ENCODE measurements at regions of chr17 and their contacts with region 1.

Region 1: DNA sequence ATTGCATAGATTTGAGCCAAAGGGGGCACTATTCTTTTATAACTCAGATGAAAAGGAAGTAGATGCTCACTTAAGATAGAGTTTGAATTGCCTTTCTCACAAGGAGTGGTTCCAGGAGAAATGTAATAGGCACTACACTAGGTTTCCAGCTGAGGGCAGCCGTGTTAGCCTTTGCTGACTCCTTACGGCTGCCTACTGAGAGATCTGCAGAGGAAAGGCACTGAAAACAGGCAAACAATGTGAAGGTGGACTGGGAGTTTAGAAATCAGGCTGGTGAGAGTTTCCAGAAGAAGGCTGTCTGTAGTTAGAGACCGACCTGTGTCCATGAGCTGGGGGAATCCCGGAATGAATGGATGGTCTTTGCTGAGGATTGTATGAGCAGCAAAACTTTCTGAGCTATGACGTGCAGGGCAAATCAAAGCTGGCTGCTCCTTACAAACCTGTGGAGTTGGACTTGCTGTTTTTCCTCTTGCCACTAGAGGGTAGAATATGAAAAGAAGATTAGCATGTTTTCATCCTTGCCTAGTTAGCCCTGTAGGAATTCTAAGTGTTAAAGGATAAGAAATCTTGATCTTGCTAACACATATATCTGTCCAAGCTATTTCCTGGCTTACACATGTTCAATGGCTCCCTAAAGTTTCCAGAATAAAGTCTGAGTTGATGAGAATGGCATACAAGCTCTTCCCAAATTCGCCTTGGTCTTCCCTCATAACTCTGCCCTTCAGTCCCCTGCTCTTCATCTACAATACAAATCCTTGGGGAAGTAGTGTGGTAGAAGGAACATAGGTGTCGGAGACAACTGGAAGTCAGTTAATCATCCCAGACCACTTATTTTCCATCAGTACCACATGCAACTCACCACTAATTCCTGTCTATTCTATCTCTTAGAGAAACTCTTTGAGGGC is 20.1 kb upstream of the TAOK1 start:
- DNase-seq: peak; percentile 53

Region 2: GRCh38 chr17:29195465-29196081 is 174.5 kb before region 1 on chr17:
- CTCF ChIA-PET with region 1: no interaction called
- POLR2A ChIA-PET with region 1: no interaction called
- DNase-seq: no peak

Region 3: GRCh38 chr17:29283271-29283895 is 86.7 kb before region 1 on chr17:
- CTCF ChIA-PET with region 1: no interaction called
- POLR2A ChIA-PET with region 1: no interaction called
- DNase-seq: no peak

Region 4: GRCh38 chr17:29384900-29385299 is 14.8 kb after region 1 on chr17:
- CTCF ChIA-PET with region 1: interaction called, 12 read pairs
- POLR2A ChIA-PET with region 1: interaction called, 8 read pairs
- DNase-seq: no peak

Region 5: DNA sequence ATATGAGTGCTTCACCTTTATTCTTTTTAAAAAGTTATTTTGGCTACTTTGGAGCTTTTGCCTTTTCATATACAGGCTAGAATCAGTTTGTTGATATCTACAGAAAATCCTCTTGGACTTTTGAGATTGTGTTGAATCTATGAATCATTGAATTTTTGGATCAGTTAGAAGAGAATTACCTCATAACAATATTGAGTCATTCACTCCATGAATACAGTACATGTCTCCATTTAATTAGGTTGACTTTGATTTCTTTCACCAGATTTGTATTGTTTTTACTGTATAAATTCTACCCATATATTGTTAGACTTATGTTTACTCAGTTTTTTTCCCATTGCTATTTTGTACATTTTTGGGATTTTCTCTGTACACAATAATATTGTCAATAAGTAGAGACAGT is 74.5 kb after region 1 on chr17:
- CTCF ChIA-PET with region 1: no interaction called
- POLR2A ChIA-PET with region 1: no interaction called
- DNase-seq: no peak

Region 6: DNA sequence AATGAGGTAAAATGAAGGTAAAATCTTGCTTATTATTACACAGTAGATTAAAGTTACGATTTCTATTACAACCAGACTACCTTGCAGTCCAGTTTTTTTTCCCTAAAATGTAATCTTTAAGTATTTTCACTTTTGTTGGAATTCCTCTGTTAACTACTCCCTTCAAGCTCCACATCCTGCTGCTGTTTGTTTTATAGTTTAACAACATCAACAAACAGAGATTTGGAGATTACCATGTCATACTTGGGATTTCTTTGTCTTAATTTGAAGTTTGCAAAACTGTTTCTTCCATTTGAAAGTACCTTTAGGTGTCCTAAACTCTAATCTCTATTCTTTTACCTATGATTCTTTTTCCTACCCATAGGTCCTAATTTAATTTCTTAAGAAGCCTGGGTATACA is 113.4 kb after region 1 on chr17:
- CTCF ChIA-PET with region 1: interaction called, 12 read pairs
- POLR2A ChIA-PET with region 1: interaction called, 3 read pairs
- DNase-seq: no peak

Region 7: GRCh38 chr17:29533976-29534375 is 163.9 kb after region 1 on chr17:
- CTCF ChIA-PET with region 1: interaction called, 30 read pairs
- POLR2A ChIA-PET with region 1: no interaction called
- DNase-seq: no peak

Region 8: DNA sequence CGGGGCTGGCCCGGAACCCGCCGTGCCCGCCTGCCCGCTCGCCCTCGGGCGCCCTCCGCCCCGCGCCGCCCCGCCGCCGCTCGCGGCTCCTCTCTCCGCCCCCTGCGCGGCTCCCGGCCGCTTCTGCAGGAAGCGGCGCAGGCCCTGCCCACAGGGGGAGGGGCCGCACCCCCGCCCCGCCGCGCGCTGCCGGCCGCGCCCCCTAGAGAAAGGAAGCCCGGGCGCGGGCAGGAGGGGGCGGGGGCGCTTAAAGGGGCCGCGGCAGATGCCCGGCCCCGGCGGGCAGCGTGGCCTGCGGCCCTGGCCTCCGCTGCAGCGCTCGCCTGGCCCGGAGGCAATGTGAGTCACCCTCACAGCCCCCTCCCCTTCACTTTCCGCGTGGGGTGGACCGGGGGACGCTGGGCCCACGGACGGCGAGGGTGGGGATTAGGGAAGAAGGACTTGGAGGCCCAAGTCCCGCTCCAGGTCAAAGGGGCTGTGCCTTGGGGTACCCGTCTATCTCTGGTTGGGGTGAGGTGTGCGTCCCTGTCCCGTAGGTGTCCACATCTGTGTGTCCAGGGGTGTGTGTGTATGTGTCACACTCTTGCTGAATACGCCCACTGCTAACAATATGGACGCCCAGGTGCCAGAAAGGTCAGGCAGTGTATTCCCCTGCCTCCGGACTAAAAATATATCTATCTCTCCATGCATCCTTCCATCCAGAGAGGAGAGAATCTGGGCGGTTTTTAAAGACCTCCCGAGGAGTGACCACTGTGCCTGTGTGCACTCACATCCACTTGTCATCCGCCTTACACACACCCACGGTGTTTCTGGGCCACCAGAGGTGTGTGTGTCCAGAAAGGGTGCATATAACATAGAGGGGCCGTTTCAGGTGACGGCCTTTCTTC is 219.7 kb after region 1 on chr17 and contains the start of gene GIT1:
- CTCF ChIA-PET with region 1: interaction called, 12 read pairs
- POLR2A ChIA-PET with region 1: interaction called, 4 read pairs
- DNase-seq: peak; percentile 80

Measured in HEK293T (cell line).